Esophagus muscularis mucosa (tissue), 4 donors: ENCODE measurements at regions of chr12 and their contacts with region 1.

Region 1: DNA sequence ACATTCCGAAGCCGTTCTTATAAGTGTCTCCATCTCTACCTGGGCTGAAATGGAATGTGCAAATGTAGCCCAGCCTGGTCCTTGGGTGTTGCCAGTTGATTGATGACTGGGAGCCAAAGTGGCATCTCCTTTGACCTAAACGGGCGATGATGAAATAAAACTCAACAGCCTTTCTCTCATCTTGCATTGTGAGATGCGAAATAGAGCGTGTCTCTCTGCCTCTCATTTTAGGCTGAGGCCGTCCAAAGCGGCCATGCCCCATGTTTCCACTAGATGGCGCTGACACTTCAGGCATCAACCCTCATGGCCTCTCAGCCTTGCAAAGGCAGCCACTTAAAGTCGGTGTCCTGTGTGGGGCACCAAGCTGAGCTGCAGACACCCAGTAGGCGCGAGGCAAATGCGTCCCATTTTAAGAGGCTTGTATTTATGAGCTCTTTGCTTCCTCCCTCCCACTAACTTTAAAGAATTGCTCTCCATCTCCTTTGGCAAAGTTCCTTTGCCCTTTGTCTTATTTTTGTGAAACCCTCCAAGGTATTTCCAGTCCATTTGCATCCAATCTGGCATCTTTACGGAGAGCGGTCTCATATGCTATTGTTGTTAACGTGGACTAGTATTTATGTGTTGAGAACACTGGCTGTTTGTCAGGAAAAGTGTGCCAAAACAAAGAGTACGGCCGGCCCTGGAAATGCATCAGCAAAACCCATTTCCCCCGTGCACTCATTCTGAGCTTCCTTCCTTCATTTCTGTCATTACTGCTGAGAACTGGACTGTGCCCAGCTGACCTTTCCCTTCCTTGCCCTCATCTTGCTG is 25.0 kb downstream of the GPRC5A start:
- DNase-seq: peak; percentile 97
- H3K4me3 ChIP-seq: peak overlapping the region in 3 of 4 donors; percentile 7 to 20 (median 19)
- H3K27ac ChIP-seq: peak overlapping the region; percentile 27 to 43 (median 32)
- H3K4me1 ChIP-seq: peaks cover 7 to 19% (median 10%) of the 10 kb centered on the region in 4 donors
- H3K27me3 ChIP-seq: no peaks in the 10 kb centered on the region
- CTCF ChIP-seq: peak; percentile 95 to 99 (median 96)
- EP300 ChIP-seq: no peak
- POLR2A ChIP-seq: no peak

Region 2: DNA sequence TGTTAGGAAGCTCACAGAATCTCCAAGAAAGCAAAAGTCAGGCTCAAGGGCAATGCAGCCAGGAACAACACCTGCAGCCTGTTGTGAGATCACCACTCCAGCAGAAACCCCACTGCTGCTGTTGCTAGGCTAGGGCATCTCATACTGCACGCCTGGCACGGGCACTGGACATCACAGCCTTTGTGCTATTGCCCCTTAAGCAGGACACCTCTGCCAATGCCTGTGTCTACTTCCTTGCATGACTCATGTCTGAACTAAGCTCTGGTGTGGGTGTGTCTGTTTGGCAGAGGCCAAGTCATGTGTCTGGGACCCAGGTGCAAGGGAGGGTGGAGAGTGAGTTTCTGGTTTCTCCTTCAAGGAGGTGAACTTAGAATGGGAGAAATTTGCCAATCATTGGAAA is 113.2 kb before region 1 on chr12:
- intact Hi-C with region 1: no loop called
- DNase-seq: no peak
- H3K4me3 ChIP-seq: no peak overlapping the region
- H3K27ac ChIP-seq: peak overlapping the region in 3 of 4 donors; percentile 16 to 27 (median 20)
- H3K4me1 ChIP-seq: peaks cover 8 to 31% (median 20%) of the 10 kb centered on the region in 4 donors
- H3K27me3 ChIP-seq: no peaks in the 10 kb centered on the region
- CTCF ChIP-seq: no peak
- EP300 ChIP-seq: no peak
- POLR2A ChIP-seq: no peak

Region 3: DNA sequence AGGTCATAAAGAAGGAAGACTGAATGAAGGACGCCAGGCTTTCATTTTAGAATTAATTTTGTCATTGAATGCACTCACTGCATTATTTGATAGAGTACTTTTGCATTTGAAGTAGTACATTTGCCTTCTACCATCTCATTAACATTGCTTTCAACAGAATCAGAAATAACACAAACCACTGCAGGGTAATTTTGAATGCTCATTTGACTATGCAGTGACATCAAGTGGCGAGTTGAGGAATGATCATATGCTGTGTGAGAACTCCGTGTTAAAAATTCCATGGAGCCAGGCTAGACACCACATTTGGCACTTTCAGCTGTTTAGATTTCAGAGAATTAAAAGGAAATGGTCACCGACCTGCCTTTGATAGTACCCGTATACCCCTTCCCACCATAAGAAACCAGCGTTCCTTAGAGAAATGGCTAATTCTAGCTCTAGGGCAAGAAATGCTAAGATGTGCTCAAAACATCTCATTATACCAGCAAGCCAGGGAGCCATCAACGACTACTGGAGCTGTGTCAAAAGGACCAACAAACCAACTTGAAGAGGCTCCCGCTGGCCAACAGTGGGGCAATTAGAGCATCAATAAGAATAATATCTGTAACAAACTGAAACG is 67.2 kb after region 1 on chr12:
- intact Hi-C with region 1: loop called (anchors 5 kb)
- DNase-seq: no peak
- H3K4me3 ChIP-seq: no peak overlapping the region
- H3K27ac ChIP-seq: no peak overlapping the region
- H3K4me1 ChIP-seq: peaks cover 15 to 27% (median 21%) of the 10 kb centered on the region in 4 donors
- H3K27me3 ChIP-seq: no peaks in the 10 kb centered on the region
- CTCF ChIP-seq: peak; percentile 52 to 67 (median 52)
- EP300 ChIP-seq: no peak
- POLR2A ChIP-seq: no peak